ENCODE measurements at regions of chr15 and their contacts with region 1.

Region 1: DNA sequence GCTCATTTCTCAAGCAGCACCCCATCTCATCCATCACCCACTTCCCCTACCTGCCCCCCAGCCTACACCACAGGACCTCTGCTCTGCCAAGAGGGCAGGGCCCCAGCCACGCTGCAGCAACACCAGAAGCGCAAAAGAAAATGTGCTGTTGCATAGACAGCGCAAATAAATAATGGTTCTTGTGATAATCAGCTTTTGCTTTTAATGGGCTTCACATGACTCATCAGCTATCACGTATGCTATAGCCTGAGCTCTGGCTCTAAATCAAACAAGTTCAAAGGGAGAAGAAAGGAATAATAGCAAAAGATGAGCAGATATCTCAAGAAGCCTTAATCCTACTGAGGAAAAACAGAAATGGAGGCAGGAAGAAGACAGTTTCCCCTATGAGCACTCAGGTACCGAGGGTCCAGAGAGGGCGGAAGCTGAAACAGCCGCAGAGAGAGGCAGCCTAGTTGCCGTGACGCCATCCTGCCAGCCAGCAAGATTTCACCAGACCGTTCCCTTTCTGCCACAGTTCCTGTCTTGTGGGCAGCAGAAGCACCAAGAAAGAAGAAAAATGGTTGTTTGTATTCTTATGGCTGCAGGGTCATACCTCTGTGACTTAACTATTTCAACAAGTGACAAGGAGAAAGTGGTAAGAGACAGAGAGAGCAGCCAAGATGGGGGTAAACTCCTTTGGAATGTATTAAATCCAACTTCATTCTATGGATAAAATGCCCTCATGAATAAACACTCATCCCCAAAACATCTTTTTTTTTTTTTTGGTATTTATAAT is 22.0 kb downstream of the RAB27A start:
- DNase-seq: peak; percentile 59
- H3K4me3 Mint-ChIP-seq: peak overlapping the region; percentile 62
- H3K27ac Mint-ChIP-seq: peak overlapping the region; percentile 91
- H3K4me1 Mint-ChIP-seq: peaks cover 64% of the 10 kb centered on the region
- H3K27me3 Mint-ChIP-seq: no peaks in the 10 kb centered on the region

Region 2: DNA sequence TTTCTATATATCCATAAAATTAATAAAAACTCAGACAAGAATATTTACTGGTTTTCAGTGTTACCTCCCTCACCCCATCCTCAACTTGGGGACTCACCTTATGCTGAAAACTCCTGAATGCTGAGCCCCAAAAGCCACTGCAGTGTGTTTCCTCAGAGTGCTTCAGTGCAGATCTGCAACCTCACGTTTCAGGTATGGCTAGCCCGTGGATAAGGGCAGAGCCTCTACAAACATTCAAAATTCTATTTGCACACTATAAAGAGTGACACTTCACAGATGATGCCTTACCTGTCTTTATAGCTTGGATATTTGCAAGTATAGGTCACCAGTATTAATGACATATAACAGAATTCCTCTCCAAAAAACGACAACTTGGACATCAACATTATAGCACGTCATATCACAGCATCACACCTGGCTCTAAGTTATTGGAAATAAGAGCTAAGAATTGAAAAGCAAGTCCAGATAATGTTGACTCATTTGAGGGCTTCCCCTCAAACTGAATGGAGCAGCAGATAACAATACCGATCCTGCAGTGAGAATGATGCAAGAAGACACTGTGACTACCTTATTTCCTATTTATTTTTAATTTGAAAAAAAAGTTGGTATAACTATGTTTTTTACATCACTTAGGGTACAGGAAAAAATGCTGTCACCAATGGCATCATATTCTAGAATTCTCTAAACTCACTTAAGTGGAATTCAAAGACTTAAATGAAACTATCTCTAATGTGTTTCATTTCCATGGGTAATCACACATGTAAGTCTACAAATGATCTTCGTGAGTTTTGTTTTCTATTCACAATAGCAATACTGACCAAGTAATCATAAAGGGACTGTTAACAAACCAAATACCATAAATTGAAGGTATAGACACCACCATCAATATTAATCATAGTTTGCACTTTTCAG is 30.1 kb before region 1 on chr15:
- intact Hi-C with region 1: loop called (anchors 1 kb)
- DNase-seq: no peak
- H3K4me3 Mint-ChIP-seq: peak overlapping the region; percentile 22
- H3K27ac Mint-ChIP-seq: peak overlapping the region; percentile 84
- H3K4me1 Mint-ChIP-seq: peaks cover 56% of the 10 kb centered on the region
- H3K27me3 Mint-ChIP-seq: no peaks in the 10 kb centered on the region

Region 3: GRCh38 chr15:55290528-55291057 is 23.0 kb after region 1 on chr15:
- intact Hi-C with region 1: loop called (anchors 1 kb)
- DNase-seq: peak; percentile 77
- H3K4me3 Mint-ChIP-seq: peak overlapping the region; percentile 78
- H3K27ac Mint-ChIP-seq: peak overlapping the region; percentile 83
- H3K4me1 Mint-ChIP-seq: peaks cover 31% of the 10 kb centered on the region
- H3K27me3 Mint-ChIP-seq: no peaks in the 10 kb centered on the region

Region 4: GRCh38 chr15:55348281-55348778 is 80.7 kb after region 1 on chr15:
- intact Hi-C with region 1: no loop called
- DNase-seq: no peak
- H3K4me3 Mint-ChIP-seq: no peak overlapping the region
- H3K27ac Mint-ChIP-seq: no peak overlapping the region
- H3K4me1 Mint-ChIP-seq: no peaks in the 10 kb centered on the region
- H3K27me3 Mint-ChIP-seq: no peaks in the 10 kb centered on the region

Measured in activated T-helper 2 cell treated with anti-CD3 and anti-CD28 coated beads, Interferon-gamma antibody, Interleukin-2, Interleukin-4, amounts not matched to agents 10 μg/mL and 5 μg/mL and 100 μg/mL, durations not matched to agents 14 hours and 24 hours and 36 hours (primary cell).